CD4-positive, alpha-beta T cell (primary cell): ENCODE measurements at regions of chr21 and their contacts with region 1.

Region 1: DNA sequence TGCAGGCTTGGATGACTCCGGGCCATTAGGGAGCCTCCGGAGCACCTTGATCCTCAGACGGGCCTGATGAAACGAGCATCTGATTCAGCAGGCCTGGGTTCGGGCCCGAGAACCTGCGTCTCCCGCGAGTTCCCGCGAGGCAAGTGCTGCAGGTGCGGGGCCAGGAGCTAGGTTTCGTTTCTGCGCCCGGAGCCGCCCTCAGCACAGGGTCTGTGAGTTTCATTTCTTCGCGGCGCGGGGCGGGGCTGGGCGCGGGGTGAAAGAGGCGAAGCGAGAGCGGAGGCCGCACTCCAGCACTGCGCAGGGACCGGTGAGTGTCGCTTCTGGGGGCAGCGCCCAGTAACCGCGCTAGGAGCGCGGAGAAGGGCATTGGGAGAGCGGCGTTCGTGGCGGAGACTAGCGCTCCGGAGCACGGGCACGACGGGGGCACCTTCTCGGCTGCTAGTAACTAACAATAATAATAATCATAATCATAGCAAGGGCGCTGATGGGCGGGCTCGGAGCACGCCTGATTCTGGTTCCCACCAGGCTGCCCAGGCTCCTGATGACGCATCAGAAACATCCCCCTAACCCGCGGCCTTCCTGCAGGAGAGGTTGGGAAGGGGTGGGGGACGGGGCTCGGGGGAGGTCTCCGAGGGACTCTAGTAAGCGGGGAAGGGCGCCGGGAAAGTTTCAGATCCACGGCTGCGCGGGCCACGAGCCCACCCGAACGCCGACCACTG is at the start of gene MX1:
- DNase-seq: peak; percentile 84 to 99 (median 89)
- ATAC-seq: peak; percentile 98
- H3K4me3 ChIP-seq: peak within 1 kb of the TSS; percentile 96
- H3K4me3 Mint-ChIP-seq: peak within 1 kb of the TSS; percentile 99
- H3K27ac ChIP-seq: peak within 1 kb of the TSS; percentile 30 to 62
- H3K27ac Mint-ChIP-seq: peak within 1 kb of the TSS; percentile 95
- H3K4me1 ChIP-seq: peaks cover 28% of the 10 kb centered on the region
- H3K4me1 Mint-ChIP-seq: peaks cover 70% of the 10 kb centered on the region
- H3K27me3 ChIP-seq: no peaks in the 10 kb centered on the region
- H3K27me3 Mint-ChIP-seq: no peaks in the 10 kb centered on the region
- CTCF ChIP-seq: no peak
- total RNA-seq, gene MX1: 82.3 to 86.3 TPM

Region 2: GRCh38 chr21:41269535-41269934 is 156.6 kb before region 1 on chr21:
- CTCF ChIA-PET with region 1: no interaction called
- POLR2A ChIA-PET with region 1: no interaction called
- intact Hi-C with region 1: no loop called
- DNase-seq: no peak
- ATAC-seq: no peak
- H3K4me3 ChIP-seq: no peak overlapping the region
- H3K4me3 Mint-ChIP-seq: no peak overlapping the region
- H3K27ac ChIP-seq: no peak overlapping the region
- H3K27ac Mint-ChIP-seq: no peak overlapping the region
- H3K4me1 ChIP-seq: no peaks in the 10 kb centered on the region
- H3K4me1 Mint-ChIP-seq: no peaks in the 10 kb centered on the region
- H3K27me3 ChIP-seq: no peaks in the 10 kb centered on the region
- H3K27me3 Mint-ChIP-seq: peaks cover 26% of the 10 kb centered on the region
- CTCF ChIP-seq: no peak

Region 3: GRCh38 chr21:41361786-41362604 is 64.1 kb before region 1 on chr21 and contains the start of gene MX2:
- CTCF ChIA-PET with region 1: no interaction called
- POLR2A ChIA-PET with region 1: interaction called, 76 read pairs
- intact Hi-C with region 1: loop called (anchors 2 kb)
- DNase-seq: peak; percentile 67 to 96 (median 81)
- ATAC-seq: peak; percentile 79
- H3K4me3 ChIP-seq: peak within 1 kb of the TSS; percentile 89
- H3K4me3 Mint-ChIP-seq: peak within 1 kb of the TSS; percentile 93
- H3K27ac ChIP-seq: peak within 1 kb of the TSS; percentile 95 to 98
- H3K27ac Mint-ChIP-seq: peak within 1 kb of the TSS; percentile 98
- H3K4me1 ChIP-seq: peaks cover 50% of the 10 kb centered on the region
- H3K4me1 Mint-ChIP-seq: peaks cover 61% of the 10 kb centered on the region
- H3K27me3 ChIP-seq: no peaks in the 10 kb centered on the region
- H3K27me3 Mint-ChIP-seq: no peaks in the 10 kb centered on the region
- CTCF ChIP-seq: no peak
- total RNA-seq, gene MX2: 77.8 to 87.1 TPM

Region 4: DNA sequence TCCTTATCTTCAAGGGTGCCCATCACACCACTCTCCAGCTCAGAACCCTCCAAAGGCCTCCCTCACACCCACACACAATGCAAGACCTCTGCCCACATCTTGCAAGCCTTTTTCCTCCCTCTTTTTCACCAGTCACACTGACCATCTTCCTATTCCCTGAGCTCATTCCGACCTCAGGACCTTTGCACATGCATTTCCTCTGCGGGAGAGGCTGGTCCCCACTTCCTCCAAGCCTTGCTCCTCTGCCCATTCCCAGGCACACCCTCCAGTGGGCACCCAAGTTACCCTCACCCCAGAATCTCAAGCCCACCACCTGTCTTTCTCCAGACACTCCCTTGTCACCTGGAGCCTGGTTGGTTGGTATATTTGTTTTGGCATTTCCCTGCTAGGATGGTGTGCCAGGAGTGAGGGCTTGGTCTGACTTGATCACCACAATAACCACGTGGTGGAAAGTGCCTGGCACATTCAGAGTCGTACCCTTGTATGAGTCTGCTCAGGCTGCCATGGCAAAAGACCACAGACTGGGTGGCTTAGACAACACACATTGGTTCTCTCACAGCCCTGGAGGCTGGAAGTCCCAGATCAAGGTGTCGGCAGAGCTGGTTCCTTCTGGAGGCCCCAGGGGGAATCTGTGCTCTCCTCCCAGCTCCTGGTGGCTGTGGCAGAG is 51.1 kb before region 1 on chr21:
- CTCF ChIA-PET with region 1: no interaction called
- POLR2A ChIA-PET with region 1: interaction called, 87 read pairs
- intact Hi-C with region 1: no loop called
- DNase-seq: no peak
- ATAC-seq: no peak
- H3K4me3 ChIP-seq: no peak overlapping the region
- H3K4me3 Mint-ChIP-seq: no peak overlapping the region
- H3K27ac ChIP-seq: no peak overlapping the region
- H3K27ac Mint-ChIP-seq: peak overlapping the region; percentile 62
- H3K4me1 ChIP-seq: peaks cover 38% of the 10 kb centered on the region
- H3K4me1 Mint-ChIP-seq: peaks cover 43% of the 10 kb centered on the region
- H3K27me3 ChIP-seq: no peaks in the 10 kb centered on the region
- H3K27me3 Mint-ChIP-seq: no peaks in the 10 kb centered on the region
- CTCF ChIP-seq: no peak